ENCODE measurements at regions of chr1 and their contacts with region 1.

Region 1: DNA sequence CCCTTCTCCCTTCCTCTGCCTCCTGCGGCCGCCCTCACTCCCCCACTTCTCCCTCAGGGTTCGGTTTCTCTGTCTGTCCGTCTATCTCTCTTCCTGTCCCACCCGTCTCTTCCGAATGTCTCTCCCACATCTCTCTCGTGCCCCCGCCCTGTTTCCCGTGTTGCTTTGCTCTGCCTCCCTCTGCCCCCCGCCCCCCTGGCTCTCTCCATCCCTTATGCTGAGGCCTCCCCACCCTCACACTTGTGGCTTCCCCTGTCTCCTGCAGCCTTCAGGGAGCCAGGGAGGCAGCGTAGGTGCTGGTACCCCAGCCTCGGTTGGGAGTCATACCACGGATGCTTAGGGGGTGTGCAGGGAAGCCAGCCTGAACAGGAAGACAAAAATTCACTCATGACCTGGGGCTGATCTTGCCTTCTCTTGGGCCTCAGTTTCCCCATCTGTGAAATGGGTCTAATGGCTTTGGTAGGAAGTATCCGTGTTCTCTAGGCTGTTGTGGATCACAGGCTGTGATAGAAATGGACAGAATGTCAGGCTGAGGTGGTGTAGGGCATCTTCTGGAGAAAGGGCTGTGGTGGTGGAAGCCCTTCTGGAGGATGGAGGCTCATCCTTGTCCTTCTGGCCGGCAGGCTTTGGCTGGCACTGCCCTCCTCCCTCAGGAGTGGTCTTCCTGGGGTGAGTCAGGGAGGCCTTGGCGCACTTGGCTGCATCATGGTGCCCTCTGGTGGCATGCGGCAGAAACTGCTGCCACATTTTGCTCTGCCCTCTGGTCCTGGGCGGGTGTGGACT is 55.5 kb downstream of the FOXO6 start:
- DNase-seq: peak; percentile 43
- ATAC-seq: peak; percentile 78
- H3K4me3 ChIP-seq: no peak overlapping the region
- H3K27ac ChIP-seq: no peak overlapping the region
- H3K4me1 ChIP-seq: peaks cover 13% of the 10 kb centered on the region
- H3K27me3 ChIP-seq: no peaks in the 10 kb centered on the region
- CTCF ChIP-seq: peak; percentile 97
- EP300 ChIP-seq: no peak
- POLR2A ChIP-seq: no peak
- RAD21 ChIP-seq: peak; percentile 94

Region 2: DNA sequence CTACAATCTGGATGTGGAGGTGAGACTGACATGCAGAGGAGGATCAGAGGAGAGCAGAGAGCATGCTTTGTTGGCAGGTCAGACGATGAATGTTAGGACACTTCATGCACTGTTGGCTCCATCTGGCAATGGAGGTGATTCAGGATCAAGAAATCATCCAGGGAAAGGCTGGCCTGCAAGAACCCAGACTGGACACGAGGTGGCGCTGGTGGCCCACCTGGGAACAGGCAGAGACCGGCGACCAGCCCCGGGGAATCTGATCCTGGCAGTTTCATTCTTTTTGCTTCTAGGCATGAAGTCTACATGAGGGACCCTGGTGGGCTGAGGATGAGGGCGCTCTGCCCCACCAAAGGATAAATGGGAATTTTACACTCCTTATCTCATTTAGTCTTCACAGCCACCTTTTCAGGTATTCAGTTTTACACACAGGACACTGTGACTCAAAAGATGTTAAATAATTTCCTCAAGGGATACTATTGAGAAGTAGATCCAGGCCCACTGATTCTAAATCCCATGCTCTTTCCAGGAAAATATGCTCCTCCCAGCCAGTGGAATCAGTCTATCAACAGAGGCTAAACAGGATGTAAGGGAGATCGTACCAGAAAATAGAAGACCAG is 148.5 kb before region 1 on chr1:
- CTCF ChIA-PET with region 1: interaction called, 25 read pairs
- POLR2A ChIA-PET with region 1: no interaction called
- in situ Hi-C with region 1: no loop called
- intact Hi-C with region 1: loop called (anchors 2 kb)
- DNase-seq: peak; percentile 35
- ATAC-seq: peak; percentile 88
- H3K4me3 ChIP-seq: no peak overlapping the region
- H3K27ac ChIP-seq: no peak overlapping the region
- H3K4me1 ChIP-seq: no peaks in the 10 kb centered on the region
- H3K27me3 ChIP-seq: no peaks in the 10 kb centered on the region
- CTCF ChIP-seq: peak; percentile 94
- EP300 ChIP-seq: no peak
- POLR2A ChIP-seq: no peak
- RAD21 ChIP-seq: peak; percentile 91

Region 3: GRCh38 chr1:41282679-41283317 is 133.9 kb before region 1 on chr1:
- CTCF ChIA-PET with region 1: interaction called, 12 read pairs
- POLR2A ChIA-PET with region 1: no interaction called
- in situ Hi-C with region 1: no loop called
- intact Hi-C with region 1: loop called (anchors 5 kb)
- DNase-seq: peak; percentile 14
- ATAC-seq: peak; percentile 89
- H3K4me3 ChIP-seq: no peak overlapping the region
- H3K27ac ChIP-seq: no peak overlapping the region
- H3K4me1 ChIP-seq: no peaks in the 10 kb centered on the region
- H3K27me3 ChIP-seq: peaks cover 2 to 24% of the 10 kb centered on the region in 2 experiments; a peak in 2 of 5 replicates
- CTCF ChIP-seq: peak; percentile 89
- EP300 ChIP-seq: no peak
- POLR2A ChIP-seq: no peak
- RAD21 ChIP-seq: peak; percentile 55; the same call in 1 of the 2 replicates

Region 4: DNA sequence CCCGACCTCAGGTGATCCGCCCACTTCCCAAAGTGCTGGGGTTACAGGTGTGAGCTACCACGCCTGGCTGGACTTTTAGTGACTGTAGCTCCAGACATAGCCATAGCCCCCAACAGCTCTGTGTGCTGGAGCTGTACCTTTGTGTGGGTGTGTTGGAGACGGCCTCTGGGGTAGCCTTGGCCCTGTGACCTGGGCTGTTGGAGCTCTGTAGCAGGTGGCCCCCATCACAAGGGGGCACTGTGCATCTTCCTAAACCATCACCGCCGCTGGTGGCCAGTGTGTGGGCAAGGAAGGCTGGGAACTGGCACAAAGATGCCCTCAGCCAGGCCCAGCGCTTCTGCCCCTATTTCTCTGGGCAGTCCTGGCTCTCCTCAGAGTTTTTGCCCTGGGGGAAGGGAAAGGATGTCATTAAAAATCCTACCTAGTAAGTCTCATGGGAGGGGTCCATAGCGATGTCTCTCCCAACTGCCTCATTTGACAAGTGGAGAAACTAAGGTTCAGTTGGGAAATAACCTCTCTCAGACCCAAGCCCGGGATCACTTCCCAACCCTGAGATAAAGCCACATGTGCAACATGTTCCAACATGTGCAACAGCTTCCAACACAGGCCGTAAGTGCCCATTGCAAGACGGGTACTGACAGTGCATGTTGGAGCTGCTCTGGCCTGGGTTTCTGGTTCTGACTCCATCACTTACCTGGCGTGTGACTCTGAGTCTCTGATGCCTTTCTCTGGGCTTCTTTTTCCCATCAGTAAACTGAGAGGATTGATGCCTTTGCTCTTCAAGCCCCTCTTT is 93.7 kb before region 1 on chr1:
- CTCF ChIA-PET with region 1: interaction called, 24 read pairs
- POLR2A ChIA-PET with region 1: no interaction called
- in situ Hi-C with region 1: no loop called
- intact Hi-C with region 1: loop called (anchors 1 kb)
- DNase-seq: peak; percentile 46
- ATAC-seq: peak; percentile 96
- H3K4me3 ChIP-seq: no peak overlapping the region
- H3K27ac ChIP-seq: no peak overlapping the region
- H3K4me1 ChIP-seq: no peaks in the 10 kb centered on the region
- H3K27me3 ChIP-seq: peaks cover 0 to 4% of the 10 kb centered on the region in 2 experiments; a peak in 2 of 5 replicates
- CTCF ChIP-seq: peak; percentile 85
- EP300 ChIP-seq: no peak
- POLR2A ChIP-seq: no peak
- RAD21 ChIP-seq: peak; percentile 83

Region 5: DNA sequence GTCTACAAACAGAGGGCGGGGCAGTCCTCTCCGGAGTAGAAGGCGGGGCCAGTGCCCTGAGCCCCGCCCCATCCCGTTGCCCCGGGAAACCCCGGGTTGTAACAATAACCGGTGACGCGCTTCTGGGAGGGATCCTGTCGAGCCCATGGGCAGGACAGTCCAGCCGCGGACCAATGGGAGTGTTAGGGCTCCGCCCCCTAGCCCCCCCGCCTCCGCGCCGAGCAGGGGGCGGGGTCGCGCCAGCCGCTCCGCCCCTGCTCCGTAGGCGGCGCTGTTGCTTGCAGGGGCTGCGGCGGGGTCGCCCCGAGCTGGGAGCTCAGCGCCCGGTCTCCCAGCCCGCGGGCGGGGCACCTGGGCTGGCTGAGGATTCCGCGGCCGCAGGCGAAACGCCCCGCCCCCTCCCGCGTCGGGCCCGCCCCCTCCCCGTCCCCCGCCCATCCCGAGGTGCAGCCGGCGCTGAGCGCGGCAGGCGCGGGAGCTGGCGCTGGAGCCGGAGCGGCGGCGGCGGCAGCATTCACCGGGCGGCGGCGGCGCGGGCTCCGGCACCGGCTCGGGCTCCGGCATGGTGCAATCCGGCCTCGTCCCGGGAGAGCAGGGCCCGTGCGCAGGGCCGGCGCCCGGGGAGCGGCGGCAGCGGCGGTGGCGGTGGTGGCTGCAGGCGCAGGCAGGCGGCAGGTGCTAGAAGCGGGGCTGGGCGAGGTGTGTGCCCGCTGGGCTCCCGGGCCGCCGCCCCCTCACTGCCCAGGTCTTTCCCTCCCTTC is 55.6 kb before region 1 on chr1 and contains the start of gene FOXO6:
- CTCF ChIA-PET with region 1: no interaction called
- POLR2A ChIA-PET with region 1: interaction called, 3 read pairs
- in situ Hi-C with region 1: no loop called
- intact Hi-C with region 1: loop called (anchors 5 kb)
- DNase-seq: peak; percentile 92
- ATAC-seq: peak; percentile 89
- H3K4me3 ChIP-seq: peak within 1 kb of the TSS; percentile 7 to 68 (median 48); a peak in 4 of 6 replicates
- H3K27ac ChIP-seq: no peak within 1 kb of the TSS
- H3K4me1 ChIP-seq: peaks cover 18% of the 10 kb centered on the region
- H3K27me3 ChIP-seq: peaks cover 11 to 34% of the 10 kb centered on the region in 2 experiments
- CTCF ChIP-seq: peak; percentile 80
- EP300 ChIP-seq: peak; percentile 37 to 41; a peak in 2 of 4 replicates
- POLR2A ChIP-seq: no peak
- RAD21 ChIP-seq: peak; percentile 74
- total RNA-seq, gene FOXO6: 0.13 TPM in 1 of 2 replicates, not detected in the other